ENCODE measurements at regions of chr10 and their contacts with region 1.

Region 1: DNA sequence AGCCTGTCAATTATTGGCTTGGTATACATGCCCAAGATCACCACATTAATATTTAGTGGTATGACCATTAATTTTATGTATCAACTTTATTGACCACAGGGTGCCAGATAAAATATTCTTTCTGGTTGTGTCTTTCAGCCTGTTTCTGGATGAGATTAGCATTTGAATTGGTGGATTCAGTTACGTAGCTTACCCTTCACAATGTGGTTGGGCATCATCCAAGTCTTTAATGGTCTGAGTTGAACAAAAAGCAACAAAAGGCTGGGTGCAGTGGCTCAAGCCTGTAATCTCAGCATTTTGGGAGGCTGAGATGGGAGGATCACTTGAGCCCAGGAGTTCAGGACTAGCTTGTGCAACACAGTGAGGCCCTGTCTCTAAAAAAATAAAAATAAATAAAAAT is 702.2 kb upstream of the LRRTM3 start:
- DNase-seq: no peak
- H3K4me3 ChIP-seq: no peak overlapping the region
- H3K27ac ChIP-seq: no peak overlapping the region
- H3K4me1 ChIP-seq: no peaks in the 10 kb centered on the region
- H3K27me3 ChIP-seq: no peaks in the 10 kb centered on the region
- CTCF ChIP-seq: no peak

Region 2: GRCh38 chr10:65900271-65900670 is 323.4 kb before region 1 on chr10:
- CTCF ChIA-PET with region 1: interaction called, 10 read pairs
- POLR2A ChIA-PET with region 1: no interaction called
- intact Hi-C with region 1: no loop called
- DNase-seq: no peak
- H3K4me3 ChIP-seq: no peak overlapping the region
- H3K27ac ChIP-seq: no peak overlapping the region
- H3K4me1 ChIP-seq: no peaks in the 10 kb centered on the region
- H3K27me3 ChIP-seq: no peaks in the 10 kb centered on the region
- CTCF ChIP-seq: no peak

Region 3: DNA sequence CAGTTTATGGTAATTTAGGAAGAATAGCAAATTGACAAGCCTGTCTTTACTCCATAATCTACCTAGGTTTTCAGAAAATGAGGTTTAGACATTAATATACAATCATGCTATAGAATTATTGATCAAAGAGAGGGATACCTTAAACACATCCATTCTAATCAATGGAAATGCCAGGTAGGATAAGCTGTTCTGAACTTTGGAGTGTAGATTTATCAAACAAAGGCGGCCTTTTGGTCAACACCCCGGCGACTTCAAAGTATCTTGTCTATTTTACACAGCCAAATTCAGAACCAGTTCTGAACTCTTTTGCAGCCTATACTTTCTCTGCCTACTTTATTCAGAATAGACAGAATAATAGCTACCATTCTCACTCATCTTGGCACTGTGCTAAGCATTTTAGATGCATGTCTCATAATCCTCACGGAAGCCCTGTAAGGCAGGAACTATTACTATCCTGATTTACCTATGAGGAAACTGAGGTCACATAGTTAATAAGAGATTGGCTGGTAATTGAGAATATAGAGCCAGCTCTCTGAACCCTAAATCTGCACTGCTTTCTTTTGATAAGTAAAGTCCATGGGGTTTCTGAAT is 60.3 kb after region 1 on chr10:
- CTCF ChIA-PET with region 1: no interaction called
- POLR2A ChIA-PET with region 1: no interaction called
- intact Hi-C with region 1: loop called (anchors 10 kb)
- DNase-seq: no peak
- H3K4me3 ChIP-seq: no peak overlapping the region
- H3K27ac ChIP-seq: no peak overlapping the region
- H3K4me1 ChIP-seq: no peaks in the 10 kb centered on the region
- H3K27me3 ChIP-seq: no peaks in the 10 kb centered on the region
- CTCF ChIP-seq: no peak